Psoas muscle (tissue), 8 donors: ENCODE measurements at regions of chr21 and their contacts with region 1.

Region 1: GRCh38 chr21:29538115-29538514 is 239.4 kb downstream of the BACH1 start:
- DNase-seq: no peak
- ATAC-seq: no peak
- H3K4me3 ChIP-seq: no peak overlapping the region
- H3K27ac ChIP-seq: no peak overlapping the region
- H3K4me1 ChIP-seq: no peaks in the 10 kb centered on the region
- H3K27me3 ChIP-seq: no peaks in the 10 kb centered on the region
- CTCF ChIP-seq: no peak

Region 2: DNA sequence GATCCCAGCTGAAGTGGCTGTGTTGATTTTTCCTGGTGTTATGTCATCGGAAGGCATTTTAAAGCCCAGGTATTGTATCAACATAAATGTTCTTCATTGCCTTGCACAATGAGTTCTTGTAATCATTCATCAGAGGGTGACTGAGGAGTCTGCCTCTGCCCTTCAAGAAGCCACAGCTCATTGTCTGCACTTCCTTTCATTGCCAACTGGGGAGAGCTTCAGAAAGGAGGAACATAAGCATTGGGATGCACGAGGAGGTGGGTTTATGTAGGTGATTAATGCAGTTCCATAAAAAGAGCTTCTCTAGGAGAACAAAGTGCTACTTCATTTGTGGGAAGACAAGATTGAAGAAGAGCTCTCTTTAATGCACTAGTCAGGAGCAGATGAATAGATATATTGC is 115.0 kb before region 1 on chr21:
- intact Hi-C with region 1: no loop called
- DNase-seq: no peak
- ATAC-seq: no peak
- H3K4me3 ChIP-seq: no peak overlapping the region
- H3K27ac ChIP-seq: no peak overlapping the region
- H3K4me1 ChIP-seq: no peaks in the 10 kb centered on the region
- H3K27me3 ChIP-seq: no peaks in the 10 kb centered on the region
- CTCF ChIP-seq: no peak

Region 3: DNA sequence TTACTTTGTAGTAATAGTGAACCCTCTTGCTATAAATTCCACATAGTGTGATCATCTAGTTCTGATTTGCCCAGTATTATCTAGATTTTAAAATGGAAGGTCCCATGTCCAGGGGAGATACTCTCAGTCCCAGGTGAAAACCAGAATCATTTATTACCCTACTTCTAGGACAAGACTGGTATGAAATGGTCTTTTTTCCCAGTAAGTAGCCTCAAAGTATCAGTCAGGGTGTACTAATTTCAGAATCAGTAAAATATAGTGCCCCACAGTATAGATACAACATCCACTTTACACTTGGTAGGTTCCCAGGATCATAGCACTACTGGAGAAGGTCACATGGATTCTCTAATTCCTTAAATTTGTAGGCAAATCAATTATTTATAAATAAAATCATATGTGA is 83.4 kb after region 1 on chr21:
- intact Hi-C with region 1: loop called in 1 of 2 experiments (anchors 2 kb)
- DNase-seq: no peak
- ATAC-seq: no peak
- H3K4me3 ChIP-seq: no peak overlapping the region
- H3K27ac ChIP-seq: no peak overlapping the region
- H3K4me1 ChIP-seq: no peaks in the 10 kb centered on the region
- H3K27me3 ChIP-seq: no peaks in the 10 kb centered on the region
- CTCF ChIP-seq: no peak